Activated CD8-positive, alpha-beta memory T cell treated with anti-CD3 and anti-CD28 coated beads, Interleukin-2, amount 10 ng/mL, durations not matched to agents 7 days and 5 days (primary cell): ENCODE measurements at regions of chr5 and their contacts with region 1.

Region 1: GRCh38 chr5:141557681-141558136 is 61.1 kb downstream of the DIAPH1 start:
- DNase-seq: peak; percentile 78
- ATAC-seq: peak; percentile 78
- H3K4me3 Mint-ChIP-seq: no peak overlapping the region
- H3K27ac Mint-ChIP-seq: peak overlapping the region; percentile 38
- H3K4me1 Mint-ChIP-seq: peaks cover 14% of the 10 kb centered on the region
- H3K27me3 Mint-ChIP-seq: no peaks in the 10 kb centered on the region

Region 2: DNA sequence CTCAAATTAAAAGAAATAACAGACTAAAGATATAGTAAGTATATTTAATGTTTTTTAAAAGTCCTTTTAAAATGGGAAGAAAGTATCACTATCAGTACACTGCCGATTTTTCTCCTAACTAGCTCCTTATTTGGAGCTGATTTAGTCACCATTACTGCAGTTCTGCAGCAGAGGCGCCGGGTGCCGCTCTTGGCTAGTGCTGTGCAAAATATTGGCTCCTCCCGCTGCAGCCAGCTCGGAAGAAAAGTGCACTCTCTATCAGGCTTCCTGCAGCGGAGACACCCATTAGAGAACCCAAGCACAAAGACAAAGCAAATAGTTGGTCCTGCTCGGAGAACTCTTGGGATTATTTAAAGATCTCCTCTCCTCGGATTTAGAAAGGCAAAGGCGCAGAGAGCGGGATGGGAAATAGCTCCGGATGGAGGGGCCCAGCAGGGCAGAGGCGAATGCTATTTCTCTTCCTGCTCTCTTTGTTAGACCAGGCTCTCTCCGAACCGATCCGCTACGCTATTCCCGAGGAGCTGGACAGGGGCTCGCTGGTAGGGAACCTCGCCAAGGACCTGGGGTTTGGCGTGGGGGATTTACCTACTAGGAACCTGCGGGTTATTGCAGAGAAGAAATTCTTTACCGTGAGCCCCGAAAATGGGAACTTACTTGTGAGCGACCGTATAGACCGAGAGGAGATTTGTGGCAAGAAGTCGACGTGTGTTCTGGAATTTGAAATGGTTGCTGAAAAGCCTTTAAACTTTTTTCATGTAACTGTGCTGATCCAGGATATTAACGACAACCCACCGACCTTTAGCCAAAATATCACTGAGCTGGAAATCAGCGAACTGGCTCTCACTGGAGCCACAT is 187.5 kb before region 1 on chr5 and contains the start of gene PCDHGB3:
- CTCF ChIA-PET with region 1: interaction called, 13 read pairs
- DNase-seq: no peak
- ATAC-seq: no peak
- H3K4me3 Mint-ChIP-seq: peak within 1 kb of the TSS; percentile 40
- H3K27ac Mint-ChIP-seq: no peak within 1 kb of the TSS
- H3K4me1 Mint-ChIP-seq: peaks cover 2% of the 10 kb centered on the region
- H3K27me3 Mint-ChIP-seq: peaks cover 71% of the 10 kb centered on the region
- total RNA-seq, gene PCDHGB3: 0.09 to 0.41 TPM

Region 3: DNA sequence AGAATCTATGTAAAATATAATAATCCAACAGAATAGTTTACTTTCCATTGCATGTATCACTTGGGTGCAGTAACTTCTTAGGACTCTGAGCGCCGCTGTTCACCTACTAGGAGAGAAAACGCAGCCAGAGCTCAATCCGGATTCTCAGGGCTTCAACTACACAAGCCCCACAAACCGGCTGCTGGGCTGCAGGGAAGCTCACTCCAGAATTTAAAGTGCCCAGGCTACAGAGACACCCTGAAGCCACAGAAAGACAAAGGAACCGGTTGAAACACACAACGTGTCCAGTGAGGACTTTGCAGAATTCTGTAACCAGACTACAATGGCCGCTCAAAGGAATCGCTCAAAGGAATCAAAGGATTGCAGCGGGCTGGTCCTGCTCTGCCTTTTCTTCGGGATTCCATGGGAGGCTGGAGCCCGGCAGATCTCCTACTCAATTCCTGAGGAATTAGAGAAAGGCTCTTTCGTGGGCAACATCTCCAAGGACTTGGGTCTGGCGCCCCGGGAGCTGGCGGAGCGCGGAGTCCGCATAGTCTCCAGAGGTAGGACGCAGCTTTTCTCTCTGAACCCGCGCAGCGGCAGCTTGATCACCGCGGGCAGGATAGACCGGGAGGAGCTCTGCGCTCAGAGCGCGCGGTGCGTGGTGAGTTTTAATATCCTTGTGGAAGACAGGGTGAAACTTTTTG is 144.7 kb before region 1 on chr5 and contains the start of gene PCDHGA10:
- CTCF ChIA-PET with region 1: interaction called, 10 read pairs
- DNase-seq: peak; percentile 69
- ATAC-seq: peak; percentile 72
- H3K4me3 Mint-ChIP-seq: peak within 1 kb of the TSS; percentile 60
- H3K27ac Mint-ChIP-seq: no peak within 1 kb of the TSS
- H3K4me1 Mint-ChIP-seq: peaks cover 15% of the 10 kb centered on the region
- H3K27me3 Mint-ChIP-seq: peaks cover 74% of the 10 kb centered on the region
- total RNA-seq, gene PCDHGA10: not detected

Region 4: GRCh38 chr5:141504216-141504615 is 53.5 kb before region 1 on chr5:
- CTCF ChIA-PET with region 1: no interaction called
- DNase-seq: no peak
- ATAC-seq: no peak
- H3K4me3 Mint-ChIP-seq: no peak overlapping the region
- H3K27ac Mint-ChIP-seq: no peak overlapping the region
- H3K4me1 Mint-ChIP-seq: peaks cover 3% of the 10 kb centered on the region
- H3K27me3 Mint-ChIP-seq: peaks cover 2% of the 10 kb centered on the region

Region 5: DNA sequence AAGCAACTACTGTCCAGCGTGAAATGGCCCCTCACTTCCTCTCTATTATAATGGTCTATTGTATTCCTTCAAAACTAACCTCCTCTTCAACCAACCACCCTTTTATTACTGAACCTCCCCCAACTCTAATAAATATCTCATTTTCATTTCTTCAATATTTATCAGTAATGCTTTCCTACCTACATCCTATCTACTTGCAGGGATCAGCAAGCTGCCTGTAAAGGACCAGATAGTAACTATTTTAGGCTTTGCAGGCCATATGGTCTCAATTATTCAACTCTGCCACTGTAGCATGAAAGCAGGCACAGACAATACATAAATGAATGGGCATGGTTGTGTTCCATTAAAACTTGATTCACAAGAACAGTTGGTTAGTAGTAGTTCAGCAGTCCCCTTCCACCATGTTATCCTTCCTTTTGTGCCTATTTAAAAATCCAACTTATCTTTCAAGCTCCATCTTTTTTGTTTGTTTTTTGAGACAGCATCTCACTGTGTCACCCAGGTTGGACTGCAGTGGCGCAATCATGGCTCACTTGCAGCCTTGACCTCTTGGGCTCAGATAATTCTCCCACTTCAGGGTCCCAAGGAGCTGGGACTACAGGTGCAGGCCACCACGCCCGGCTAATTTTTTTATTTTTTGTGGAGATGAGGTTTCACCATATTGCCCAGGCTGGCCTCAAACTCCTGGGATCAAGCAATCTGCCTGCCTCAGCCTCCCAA is 23.1 kb before region 1 on chr5:
- CTCF ChIA-PET with region 1: interaction called, 20 read pairs
- DNase-seq: no peak
- ATAC-seq: no peak
- H3K4me3 Mint-ChIP-seq: no peak overlapping the region
- H3K27ac Mint-ChIP-seq: no peak overlapping the region
- H3K4me1 Mint-ChIP-seq: no peaks in the 10 kb centered on the region
- H3K27me3 Mint-ChIP-seq: no peaks in the 10 kb centered on the region

Region 6: DNA sequence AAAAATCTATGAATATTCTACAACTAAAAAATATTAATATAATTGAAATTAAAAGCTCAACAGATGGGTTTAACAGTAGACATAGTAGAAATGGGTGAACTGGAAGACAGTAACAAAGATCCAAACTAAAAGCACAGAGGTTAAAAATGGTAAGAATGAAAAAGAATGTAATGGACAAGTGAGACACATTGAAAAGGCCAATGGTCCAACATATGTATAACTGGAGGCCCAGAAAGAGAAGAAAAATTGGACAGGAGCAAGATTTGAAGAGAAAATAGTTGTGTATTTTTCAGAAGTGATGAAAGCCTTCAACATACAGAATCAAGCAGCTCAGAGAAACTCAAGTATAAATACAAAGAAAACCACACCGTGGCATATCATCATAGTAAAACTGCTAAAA is 10.2 kb before region 1 on chr5:
- CTCF ChIA-PET with region 1: interaction called, 16 read pairs
- DNase-seq: no peak
- ATAC-seq: no peak
- H3K4me3 Mint-ChIP-seq: no peak overlapping the region
- H3K27ac Mint-ChIP-seq: no peak overlapping the region
- H3K4me1 Mint-ChIP-seq: no peaks in the 10 kb centered on the region
- H3K27me3 Mint-ChIP-seq: no peaks in the 10 kb centered on the region

Region 7: DNA sequence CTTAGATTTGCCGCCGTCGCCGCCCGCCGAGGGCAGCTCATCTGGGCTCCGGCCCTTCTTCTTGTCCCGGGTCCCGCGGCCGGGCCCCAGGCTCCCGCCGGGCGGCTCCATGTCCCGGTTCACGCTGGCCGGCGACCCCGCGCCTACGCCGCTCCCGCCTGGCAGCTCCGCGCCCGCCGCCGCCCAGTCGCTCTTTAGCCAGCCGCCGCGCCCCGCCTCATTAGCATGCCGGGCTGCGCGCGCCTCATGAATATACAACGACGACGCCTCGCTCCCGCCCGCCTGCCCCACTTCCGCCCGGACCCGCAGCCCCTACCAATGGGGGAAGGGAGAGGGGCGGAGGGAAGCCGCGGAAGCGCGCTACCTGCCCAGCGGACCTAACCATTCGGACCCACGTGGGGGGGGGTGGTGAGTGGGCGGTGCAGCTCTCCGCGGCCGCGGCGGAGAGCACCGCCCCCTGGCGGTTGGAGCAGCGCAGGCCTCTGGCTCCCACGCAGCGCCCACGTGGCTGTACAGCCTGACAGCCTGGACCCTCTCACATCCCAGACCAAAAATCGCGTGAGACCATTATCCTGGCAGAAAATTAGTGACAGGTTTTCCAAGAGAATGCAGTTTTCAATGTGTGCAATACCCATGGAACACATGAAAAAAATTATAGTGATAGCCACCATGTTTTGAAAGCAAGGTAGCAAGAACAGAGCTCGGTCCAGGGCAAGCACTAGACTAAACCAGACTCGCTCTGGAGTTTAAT is 61.3 kb after region 1 on chr5 and contains the start of gene DIAPH1:
- CTCF ChIA-PET with region 1: interaction called, 13 read pairs
- DNase-seq: peak; percentile 98
- ATAC-seq: peak; percentile 93
- H3K4me3 Mint-ChIP-seq: peak within 1 kb of the TSS; percentile 100
- H3K27ac Mint-ChIP-seq: peak within 1 kb of the TSS; percentile 98
- H3K4me1 Mint-ChIP-seq: peaks cover 55% of the 10 kb centered on the region
- H3K27me3 Mint-ChIP-seq: no peaks in the 10 kb centered on the region
- total RNA-seq, gene DIAPH1: 284 to 295 TPM